ENCODE measurements at regions of chrX and their contacts with region 1.

Region 1: GRCh38 chrX:135345107-135345589 is 35.9 kb downstream of the ETDC start:
- DNase-seq: peak; percentile 47 to 62 (median 52)
- ATAC-seq: peak in 3 of 4 donors; percentile 8 to 49 (median 21)
- H3K4me3 ChIP-seq: peak overlapping the region; percentile 45 to 92 (median 75)
- H3K27ac ChIP-seq: peak overlapping the region; percentile 88 to 100 (median 96)
- H3K4me1 ChIP-seq: peaks cover 0 to 35% (median 19%) of the 10 kb centered on the region in 12 donors
- H3K27me3 ChIP-seq: no peaks in the 10 kb centered on the region
- CTCF ChIP-seq: no peak
- POLR2A ChIP-seq: no peak

Region 2: GRCh38 chrX:134963041-134963440 is 382.1 kb before region 1 on chrX:
- intact Hi-C with region 1: no loop called
- DNase-seq: no peak
- ATAC-seq: no peak
- H3K4me3 ChIP-seq: no peak overlapping the region
- H3K27ac ChIP-seq: no peak overlapping the region
- H3K4me1 ChIP-seq: no peaks in the 10 kb centered on the region
- H3K27me3 ChIP-seq: peaks cover 0 to 12% (median 0%) of the 10 kb centered on the region in 9 donors
- CTCF ChIP-seq: no peak
- POLR2A ChIP-seq: no peak

Region 3: GRCh38 chrX:135275973-135276372 is 69.2 kb before region 1 on chrX:
- intact Hi-C with region 1: no loop called
- DNase-seq: no peak
- ATAC-seq: no peak
- H3K4me3 ChIP-seq: no peak overlapping the region
- H3K27ac ChIP-seq: no peak overlapping the region
- H3K4me1 ChIP-seq: no peaks in the 10 kb centered on the region
- H3K27me3 ChIP-seq: no peaks in the 10 kb centered on the region
- CTCF ChIP-seq: no peak
- POLR2A ChIP-seq: no peak

Region 4: DNA sequence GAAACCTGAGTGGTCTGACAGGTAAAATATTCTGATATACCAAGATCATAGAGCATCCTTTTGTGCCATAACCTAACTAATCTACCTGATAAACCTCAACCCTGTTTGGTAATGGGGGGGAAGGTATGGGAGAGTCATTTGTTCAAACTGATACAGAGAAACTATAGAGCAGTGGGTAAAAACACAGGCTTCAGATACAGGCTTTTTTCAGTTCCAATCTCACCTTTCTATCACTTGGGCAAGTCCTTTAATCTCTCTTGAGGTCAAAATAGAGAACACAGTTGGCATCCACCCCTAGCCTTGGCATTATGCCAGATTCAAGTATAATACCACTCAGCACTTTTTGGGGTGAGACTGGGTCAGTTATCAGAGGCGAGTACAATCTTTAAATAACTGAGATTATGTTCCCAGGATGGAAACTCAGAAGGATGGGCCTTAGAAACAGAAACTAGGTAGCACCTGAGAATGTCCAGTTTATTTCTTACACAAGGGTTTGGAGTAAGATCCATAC is 36.7 kb before region 1 on chrX:
- intact Hi-C with region 1: no loop called
- DNase-seq: no peak
- ATAC-seq: no peak
- H3K4me3 ChIP-seq: no peak overlapping the region
- H3K27ac ChIP-seq: no peak overlapping the region
- H3K4me1 ChIP-seq: peaks cover 0 to 10% (median 0%) of the 10 kb centered on the region in 12 donors
- H3K27me3 ChIP-seq: no peaks in the 10 kb centered on the region
- CTCF ChIP-seq: no peak
- POLR2A ChIP-seq: no peak

Region 5: DNA sequence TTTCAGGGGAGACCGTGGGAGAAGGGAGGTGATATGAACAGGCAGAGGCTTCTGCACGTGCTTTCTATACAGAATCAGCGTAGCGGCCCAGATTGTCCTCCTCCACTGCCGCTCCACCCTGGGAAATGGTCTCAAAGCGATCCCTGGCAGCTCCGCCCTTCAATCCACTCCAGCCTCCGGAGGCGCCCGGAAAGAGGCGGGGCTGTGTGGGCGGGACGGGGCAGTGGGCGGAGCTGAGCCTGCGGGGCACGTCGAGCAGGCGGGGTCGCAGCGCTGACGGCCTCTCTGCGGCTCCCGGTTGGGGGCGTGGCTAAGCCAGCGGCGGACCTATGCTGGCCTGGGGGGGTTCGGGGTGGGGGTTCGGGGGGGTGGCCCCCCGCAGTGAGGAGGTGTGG is 76.4 kb after region 1 on chrX:
- intact Hi-C with region 1: loop called in 1 of 10 experiments (anchors 5 kb)
- DNase-seq: peak; percentile 88 to 94 (median 89)
- ATAC-seq: peak; percentile 90 to 98 (median 96)
- H3K4me3 ChIP-seq: peak overlapping the region; percentile 25 to 71 (median 55)
- H3K27ac ChIP-seq: peak overlapping the region in 1 of 12 donors; percentile 9
- H3K4me1 ChIP-seq: peaks cover 0 to 10% (median 0%) of the 10 kb centered on the region in 12 donors
- H3K27me3 ChIP-seq: peaks cover 0 to 3% (median 0%) of the 10 kb centered on the region in 9 donors
- CTCF ChIP-seq: no peak
- POLR2A ChIP-seq: peak in 1 of 2 donors; percentile 22

Measured in heart left ventricle (tissue), 16 donors.